ENCODE measurements at regions of chr3 and their contacts with region 1.

Region 1: GRCh38 chr3:152405915-152406802 is 137.4 kb downstream of the MBNL1 start:
- DNase-seq: peak in 1 of 2 donors; percentile 56
- ATAC-seq: peak; percentile 63 to 69
- H3K4me3 ChIP-seq: peak overlapping the region; percentile 35 to 47 (median 43)
- H3K27ac ChIP-seq: peak overlapping the region; percentile 92 to 96 (median 94)
- H3K4me1 ChIP-seq: peaks cover 77 to 94% of the 10 kb centered on the region in 2 donors
- H3K27me3 ChIP-seq: no peaks in the 10 kb centered on the region
- CTCF ChIP-seq: no peak
- POLR2A ChIP-seq: peak in 1 of 2 donors; percentile 33

Region 2: GRCh38 chr3:152298393-152299242 is 107.5 kb before region 1 on chr3:
- in situ Hi-C with region 1: loop called in 1 of 4 experiments (anchors 5 kb)
- intact Hi-C with region 1: loop called (anchors 2 kb)
- DNase-seq: peak; percentile 77 to 82
- ATAC-seq: peak; percentile 74 to 76
- H3K4me3 ChIP-seq: peak overlapping the region; percentile 44 to 67 (median 55)
- H3K27ac ChIP-seq: peak overlapping the region; percentile 85 to 92 (median 88)
- H3K4me1 ChIP-seq: peaks cover 47 to 49% of the 10 kb centered on the region in 2 donors
- H3K27me3 ChIP-seq: no peaks in the 10 kb centered on the region
- CTCF ChIP-seq: no peak
- POLR2A ChIP-seq: peak; percentile 43 to 79

Region 3: GRCh38 chr3:152554980-152555379 is 148.8 kb after region 1 on chr3:
- in situ Hi-C with region 1: no loop called
- intact Hi-C with region 1: no loop called
- DNase-seq: peak; percentile 22 to 29
- ATAC-seq: peak; percentile 58 to 68
- H3K4me3 ChIP-seq: no peak overlapping the region
- H3K27ac ChIP-seq: peak overlapping the region; percentile 68 to 82 (median 75)
- H3K4me1 ChIP-seq: peaks cover 33 to 35% of the 10 kb centered on the region in 2 donors
- H3K27me3 ChIP-seq: no peaks in the 10 kb centered on the region
- CTCF ChIP-seq: no peak
- POLR2A ChIP-seq: no peak

Region 4: DNA sequence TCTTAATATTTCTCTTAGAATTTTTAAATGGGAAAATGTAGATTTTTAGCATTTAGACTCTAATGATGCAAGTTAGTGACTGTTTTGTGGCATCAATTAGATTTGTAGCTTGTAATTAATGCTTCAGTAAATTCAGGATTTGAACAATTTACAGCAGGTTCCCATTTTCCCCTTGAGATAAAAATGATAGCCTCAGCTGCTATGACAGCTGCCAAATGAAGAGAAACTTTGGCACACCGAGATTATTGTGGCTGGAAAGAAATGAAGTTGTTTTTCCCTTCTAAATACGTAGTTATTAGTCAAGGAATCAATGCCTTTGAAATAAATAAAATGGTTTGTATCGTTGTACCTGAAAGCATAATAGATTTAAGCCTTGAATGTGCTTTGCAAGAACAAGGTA is 222.3 kb after region 1 on chr3:
- in situ Hi-C with region 1: no loop called
- intact Hi-C with region 1: no loop called
- DNase-seq: no peak
- ATAC-seq: no peak
- H3K4me3 ChIP-seq: no peak overlapping the region
- H3K27ac ChIP-seq: no peak overlapping the region
- H3K4me1 ChIP-seq: no peaks in the 10 kb centered on the region
- H3K27me3 ChIP-seq: no peaks in the 10 kb centered on the region
- CTCF ChIP-seq: no peak
- POLR2A ChIP-seq: no peak

Measured in gastrocnemius medialis (tissue), 4 donors.